ENCODE measurements at regions of chr19 and their contacts with region 1.

Region 1: DNA sequence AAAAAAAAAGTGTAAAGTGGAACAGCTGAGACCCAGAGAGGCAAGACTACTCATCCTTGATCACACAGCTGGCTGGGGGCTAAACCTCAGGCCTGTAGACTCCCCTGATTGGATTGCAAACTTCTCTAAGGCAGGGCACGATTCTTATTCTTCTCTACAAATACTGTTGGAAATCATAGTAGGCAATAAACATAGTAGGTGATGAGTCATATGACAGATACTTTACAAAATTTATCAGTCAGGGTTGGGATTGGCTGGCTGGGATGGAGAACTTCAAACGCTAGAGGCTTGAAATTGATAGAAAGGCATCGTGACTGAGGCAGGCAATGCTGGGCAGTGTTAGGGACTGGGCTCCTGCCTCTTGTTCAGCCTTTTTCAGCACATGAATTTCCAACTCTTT is 5.9 kb upstream of the MATK start:
- DNase-seq: no peak

Region 2: DNA sequence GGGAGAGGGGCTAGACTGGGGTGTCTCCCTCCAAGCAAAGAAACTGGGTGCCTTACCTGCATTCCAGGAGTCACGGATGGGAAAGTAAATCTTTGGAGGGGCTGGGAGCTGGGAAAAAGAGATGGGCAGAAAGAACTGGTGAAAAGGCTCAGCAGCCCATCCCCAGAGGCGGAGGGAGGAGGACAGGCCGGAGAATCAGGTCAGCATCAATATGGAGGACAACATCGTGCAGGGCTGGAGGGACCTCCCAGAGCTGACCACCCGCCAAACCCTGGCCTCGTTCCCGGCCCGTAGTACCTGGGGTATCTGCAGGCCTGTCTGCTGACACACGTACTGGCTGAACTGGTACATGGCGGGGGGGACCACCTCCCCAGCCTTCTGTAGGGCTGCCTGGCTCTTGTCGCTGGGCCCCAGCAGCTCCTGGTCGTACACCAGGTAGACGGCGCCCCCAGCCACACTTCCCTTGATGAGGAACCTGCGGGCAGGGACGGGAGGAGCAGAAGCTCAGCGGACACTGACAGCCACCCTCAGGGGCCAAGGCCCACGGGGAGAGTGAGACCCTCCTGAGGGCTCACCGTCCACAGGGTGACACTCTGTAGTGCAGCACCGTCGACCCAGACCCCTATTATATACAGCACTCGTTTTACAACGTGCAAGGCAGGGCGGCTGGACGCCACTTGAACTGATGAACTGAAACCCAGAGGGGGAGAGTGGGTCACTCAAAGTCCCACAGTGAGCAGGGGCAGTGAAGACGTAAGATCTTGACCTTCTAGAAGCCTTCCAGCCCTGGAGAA is 1887.4 kb after region 1 on chr19:
- intact Hi-C with region 1: loop called in 1 of 2 experiments (anchors 5 kb)
- DNase-seq: no peak